Mammary epithelial cell (primary cell): ENCODE measurements at regions of chr9 and their contacts with region 1.

Region 1: GRCh38 chr9:114339130-114339908 is 9.7 kb downstream of the ORM2 start:
- DNase-seq: peak; percentile 37
- H3K4me3 ChIP-seq: no peak overlapping the region
- H3K27ac ChIP-seq: no peak overlapping the region
- H3K4me1 ChIP-seq: peaks cover 11% of the 10 kb centered on the region
- H3K27me3 ChIP-seq: no peaks in the 10 kb centered on the region
- CTCF ChIP-seq: peak; percentile 85 to 87

Region 2: DNA sequence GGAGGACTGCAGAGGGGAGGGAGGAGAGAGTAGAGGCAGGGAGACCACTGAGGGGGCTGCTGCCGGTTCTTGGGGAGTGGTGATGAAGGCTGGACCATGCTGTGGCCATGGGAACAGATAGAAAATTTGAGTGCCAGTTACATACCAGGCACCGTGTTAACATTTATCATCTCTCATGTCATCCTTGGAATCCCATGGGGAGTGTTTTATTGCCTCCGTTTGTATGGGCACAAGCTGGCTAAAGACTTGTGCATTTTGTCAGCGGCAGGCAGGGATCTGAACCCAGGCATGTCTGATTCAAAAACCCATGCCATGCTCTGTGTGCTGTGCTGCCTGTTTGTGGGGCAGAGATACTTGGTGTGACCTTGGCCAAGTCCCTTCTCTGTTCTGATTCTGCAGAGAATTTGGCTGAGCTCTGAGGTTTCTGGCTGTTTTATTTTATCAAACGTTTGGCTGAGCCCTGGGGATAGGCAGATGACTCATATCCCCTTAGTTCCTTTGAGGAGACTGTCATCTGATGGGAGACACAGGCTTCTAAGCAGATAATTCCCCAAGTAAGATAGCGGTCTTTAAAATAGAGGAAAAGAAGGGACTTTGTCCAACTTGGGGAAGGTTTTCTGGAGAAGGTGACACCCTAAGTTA is 161.8 kb before region 1 on chr9:
- CTCF ChIA-PET with region 1: no interaction called
- dilution Hi-C with region 1: no loop called
- in situ Hi-C with region 1: no loop called
- intact Hi-C with region 1: no loop called
- DNase-seq: peak; percentile 33
- H3K4me3 ChIP-seq: no peak overlapping the region
- H3K27ac ChIP-seq: no peak overlapping the region
- H3K4me1 ChIP-seq: peaks cover 24% of the 10 kb centered on the region
- H3K27me3 ChIP-seq: no peaks in the 10 kb centered on the region
- CTCF ChIP-seq: no peak

Region 3: DNA sequence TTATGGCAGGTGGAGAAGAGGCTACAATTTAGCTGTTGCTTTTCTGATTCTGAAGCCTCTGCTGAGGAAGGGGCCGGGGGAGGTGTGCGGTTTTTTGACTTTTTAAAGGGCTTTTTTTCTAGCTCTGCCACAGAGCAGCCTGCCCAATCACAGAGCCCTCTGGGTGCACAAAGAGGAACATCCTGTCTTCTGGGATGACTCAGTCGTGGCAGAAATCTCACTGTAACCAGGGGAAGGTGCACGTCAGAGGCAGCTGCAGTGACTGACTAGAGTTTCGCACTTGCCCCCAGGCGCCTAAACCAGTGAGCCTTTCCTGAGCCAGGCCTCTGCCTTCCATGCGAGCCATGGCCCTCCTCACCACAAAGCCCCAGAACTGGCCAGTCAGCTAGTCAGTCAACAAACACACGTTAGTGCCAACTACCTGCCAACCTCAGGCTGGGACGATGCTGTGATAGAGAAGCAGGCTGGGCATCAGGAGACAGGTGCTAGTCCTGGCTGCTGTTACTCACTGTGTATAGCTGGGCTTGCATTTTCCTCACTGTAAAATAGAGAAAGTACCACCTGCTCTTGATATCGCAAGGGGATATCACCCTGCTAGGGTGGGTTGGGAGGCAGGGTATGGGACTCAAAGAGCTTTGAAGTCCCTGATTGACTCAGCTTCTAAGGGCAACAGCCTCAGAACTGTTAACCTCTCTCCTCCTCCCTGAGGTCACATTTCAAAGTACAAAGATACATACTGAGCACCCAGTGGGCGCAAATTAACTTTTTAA is 46.3 kb after region 1 on chr9:
- CTCF ChIA-PET with region 1: no interaction called
- dilution Hi-C with region 1: loop called (anchors 5 kb)
- in situ Hi-C with region 1: no loop called
- intact Hi-C with region 1: no loop called
- DNase-seq: peak; percentile 97
- H3K4me3 ChIP-seq: no peak overlapping the region
- H3K27ac ChIP-seq: peak overlapping the region; percentile 67
- H3K4me1 ChIP-seq: peaks cover 31% of the 10 kb centered on the region
- H3K27me3 ChIP-seq: no peaks in the 10 kb centered on the region
- CTCF ChIP-seq: no peak

Region 4: GRCh38 chr9:114397848-114398605 is 58.7 kb after region 1 on chr9:
- CTCF ChIA-PET with region 1: no interaction called
- dilution Hi-C with region 1: no loop called
- in situ Hi-C with region 1: loop called in 1 of 2 experiments (anchors 5 kb)
- intact Hi-C with region 1: no loop called
- DNase-seq: peak; percentile 90
- H3K4me3 ChIP-seq: peak overlapping the region; percentile 43 to 68 (median 68)
- H3K27ac ChIP-seq: peak overlapping the region; percentile 68
- H3K4me1 ChIP-seq: peaks cover 24% of the 10 kb centered on the region
- H3K27me3 ChIP-seq: no peaks in the 10 kb centered on the region
- CTCF ChIP-seq: no peak

Region 5: DNA sequence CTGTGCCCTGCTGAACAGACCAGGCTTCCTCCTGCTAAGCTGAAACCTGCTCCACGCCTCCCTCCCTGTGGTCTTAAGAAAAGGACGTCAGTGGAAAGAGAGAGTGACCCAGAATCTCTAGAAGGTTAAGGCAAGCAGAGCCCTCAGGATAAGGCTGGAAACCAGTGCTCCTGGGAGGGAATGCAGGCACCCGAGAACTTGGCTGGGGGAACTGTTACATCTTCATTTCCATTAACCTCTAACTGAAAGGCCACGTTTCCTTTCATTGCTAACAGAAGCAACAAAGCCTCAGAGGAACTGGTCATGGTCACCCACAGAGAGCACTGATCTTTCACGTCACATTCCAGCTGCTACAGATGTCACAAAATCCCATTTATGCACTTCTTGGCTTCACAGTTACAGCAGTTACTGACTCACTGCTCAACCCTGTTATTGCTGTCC is 74.6 kb after region 1 on chr9:
- CTCF ChIA-PET with region 1: no interaction called
- dilution Hi-C with region 1: no loop called
- in situ Hi-C with region 1: no loop called
- intact Hi-C with region 1: loop called (anchors 1 kb)
- DNase-seq: no peak
- H3K4me3 ChIP-seq: no peak overlapping the region
- H3K27ac ChIP-seq: no peak overlapping the region
- H3K4me1 ChIP-seq: peaks cover 14% of the 10 kb centered on the region
- H3K27me3 ChIP-seq: no peaks in the 10 kb centered on the region
- CTCF ChIP-seq: no peak

Region 6: GRCh38 chr9:114505187-114506081 is 166.1 kb after region 1 on chr9 and contains the start of gene WHRN:
- CTCF ChIA-PET with region 1: no interaction called
- dilution Hi-C with region 1: no loop called
- in situ Hi-C with region 1: no loop called
- intact Hi-C with region 1: loop called (anchors 1 kb)
- DNase-seq: peak; percentile 88
- H3K4me3 ChIP-seq: peak within 1 kb of the TSS; percentile 64 to 79 (median 67)
- H3K27ac ChIP-seq: peak within 1 kb of the TSS; percentile 81
- H3K4me1 ChIP-seq: peaks cover 32% of the 10 kb centered on the region
- H3K27me3 ChIP-seq: no peaks in the 10 kb centered on the region
- CTCF ChIP-seq: no peak
- total RNA-seq, gene WHRN: 3.2 to 9.7 TPM